ENCODE measurements at regions of chr12 and their contacts with region 1.

Region 1: DNA sequence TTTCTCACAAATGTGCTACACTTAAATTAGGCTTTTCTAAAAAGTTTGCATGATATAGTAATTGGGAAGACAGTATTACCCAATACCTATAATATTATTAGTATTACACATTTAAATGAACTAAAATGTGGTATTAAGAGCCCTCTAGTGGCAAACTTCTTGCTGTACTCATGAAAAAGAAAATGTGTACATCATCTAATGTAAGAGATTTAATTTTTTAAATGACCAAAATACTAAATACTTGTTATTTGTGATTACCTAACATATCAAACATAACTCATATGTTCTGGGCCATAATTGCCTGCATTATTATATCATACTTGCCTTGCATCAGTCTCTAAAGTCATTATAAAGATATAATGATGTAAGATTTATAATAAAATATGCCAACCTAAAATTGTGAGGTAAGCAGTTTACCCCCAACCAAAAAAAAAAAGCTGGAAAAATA is 64.2 kb downstream of the DNAI7 start:
- DNase-seq: no peak
- ATAC-seq: peak; percentile 78
- H3K4me3 ChIP-seq: no peak overlapping the region
- H3K27ac ChIP-seq: no peak overlapping the region
- H3K4me1 ChIP-seq: peaks cover 2% of the 10 kb centered on the region; the same call in 1 of the 2 replicates
- H3K27me3 ChIP-seq: no peaks in the 10 kb centered on the region
- CTCF ChIP-seq: peak in 2 of 3 experiments; percentile 32 to 43; a peak in 3 of 6 replicates
- EP300 ChIP-seq: no peak
- POLR2A ChIP-seq: no peak
- RAD21 ChIP-seq: peak; percentile 65

Region 2: DNA sequence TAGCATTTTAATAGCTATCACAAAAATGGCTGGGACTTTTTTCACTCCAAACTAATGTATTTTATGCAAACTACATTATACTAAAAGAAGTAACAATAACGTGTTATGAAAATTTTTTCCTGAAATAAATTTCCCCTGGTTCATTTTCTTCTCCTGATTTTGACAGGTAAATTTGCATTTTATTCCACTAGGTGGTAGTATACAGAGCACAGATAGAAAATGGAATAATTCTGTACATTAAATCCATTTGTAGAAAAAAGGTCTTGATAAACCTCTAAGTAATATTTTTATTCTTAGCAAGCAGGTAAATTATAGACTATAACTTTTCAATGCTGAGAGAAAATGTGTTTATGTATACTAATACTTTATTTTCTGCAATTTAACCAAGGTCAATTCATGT is 278.3 kb before region 1 on chr12:
- CTCF ChIA-PET with region 1: interaction called, 41 read pairs
- POLR2A ChIA-PET with region 1: no interaction called
- RAD21 ChIA-PET with region 1: interaction called, 5 read pairs
- SMC1A ChIA-PET with region 1: interaction called, 5 read pairs
- in situ Hi-C with region 1: loop called (anchors 5 kb)
- intact Hi-C with region 1: loop called (anchors 1 kb)
- DNase-seq: no peak
- ATAC-seq: no peak; the same call in 2 of the 3 replicates
- H3K4me3 ChIP-seq: no peak overlapping the region
- H3K27ac ChIP-seq: no peak overlapping the region
- H3K4me1 ChIP-seq: no peaks in the 10 kb centered on the region
- H3K27me3 ChIP-seq: no peaks in the 10 kb centered on the region
- CTCF ChIP-seq: peak in 2 of 3 experiments; percentile 14 to 28; a peak in 2 of 6 replicates
- EP300 ChIP-seq: no peak
- POLR2A ChIP-seq: no peak
- RAD21 ChIP-seq: peak; percentile 46

Region 3: DNA sequence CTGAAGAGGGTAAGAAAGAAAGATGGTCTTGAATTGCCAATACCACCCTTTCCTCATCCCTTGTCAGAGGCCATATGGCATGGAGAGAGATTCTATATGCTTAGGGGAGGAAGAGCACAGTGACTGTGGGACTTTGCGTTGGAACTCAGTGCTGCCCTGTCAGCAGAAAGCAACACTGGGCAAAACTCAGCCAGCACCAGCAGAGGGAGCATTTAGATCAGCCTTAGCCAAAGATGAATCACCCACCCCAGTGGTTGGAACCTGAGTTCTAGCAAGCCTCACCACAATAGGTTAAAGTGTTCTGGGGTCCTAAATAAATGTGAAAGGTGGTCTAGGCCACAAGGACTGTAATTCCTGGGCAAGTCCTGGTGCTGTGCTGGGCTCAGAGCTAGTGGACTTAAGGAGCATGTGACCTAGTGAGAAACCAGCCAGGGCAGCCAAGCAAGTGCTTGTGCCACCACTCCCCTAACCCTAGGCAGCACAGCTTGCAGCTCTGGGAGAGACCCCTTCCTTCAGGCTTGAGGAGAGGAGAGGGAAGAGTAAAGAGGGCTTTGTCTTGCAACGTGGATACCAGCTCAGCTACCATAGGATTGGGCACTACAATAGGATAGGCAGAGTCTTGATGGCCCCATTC is 170.4 kb before region 1 on chr12:
- CTCF ChIA-PET with region 1: interaction called, 12 read pairs
- POLR2A ChIA-PET with region 1: no interaction called
- RAD21 ChIA-PET with region 1: interaction called, 4 read pairs
- SMC1A ChIA-PET with region 1: interaction called, 15 read pairs
- in situ Hi-C with region 1: no loop called
- intact Hi-C with region 1: loop called (anchors 1 kb)
- DNase-seq: peak; percentile 56
- ATAC-seq: peak; percentile 94
- H3K4me3 ChIP-seq: no peak overlapping the region
- H3K27ac ChIP-seq: no peak overlapping the region
- H3K4me1 ChIP-seq: peaks cover 7% of the 10 kb centered on the region
- H3K27me3 ChIP-seq: no peaks in the 10 kb centered on the region
- CTCF ChIP-seq: peak; percentile 75 to 85 (median 76)
- EP300 ChIP-seq: no peak
- POLR2A ChIP-seq: no peak
- RAD21 ChIP-seq: peak; percentile 77

Region 4: DNA sequence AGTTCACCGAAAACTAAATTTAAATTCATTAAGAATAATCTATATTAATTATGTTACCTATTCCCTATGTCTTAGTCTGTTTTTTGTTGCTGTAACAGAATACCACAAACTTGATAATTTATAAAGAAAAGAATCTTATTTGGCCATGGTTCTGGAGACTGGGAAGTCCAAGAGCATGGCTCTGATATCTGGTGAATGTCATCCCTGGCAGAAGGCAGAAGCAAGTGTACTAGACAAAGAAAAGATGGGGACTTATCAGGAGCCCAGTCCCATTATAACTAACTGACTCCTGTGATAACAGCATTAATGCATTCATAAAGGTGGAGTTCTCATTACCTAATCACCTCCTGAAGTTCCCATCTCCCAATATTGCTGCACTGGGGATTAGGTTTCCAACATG is 148.5 kb before region 1 on chr12:
- CTCF ChIA-PET with region 1: interaction called, 12 read pairs
- POLR2A ChIA-PET with region 1: no interaction called
- RAD21 ChIA-PET with region 1: interaction called, 4 read pairs
- SMC1A ChIA-PET with region 1: interaction called, 5 read pairs
- in situ Hi-C with region 1: no loop called
- intact Hi-C with region 1: no loop called
- DNase-seq: no peak
- ATAC-seq: no peak
- H3K4me3 ChIP-seq: no peak overlapping the region
- H3K27ac ChIP-seq: no peak overlapping the region
- H3K4me1 ChIP-seq: peaks cover 4% of the 10 kb centered on the region
- H3K27me3 ChIP-seq: no peaks in the 10 kb centered on the region
- CTCF ChIP-seq: no peak
- EP300 ChIP-seq: no peak
- POLR2A ChIP-seq: no peak
- RAD21 ChIP-seq: no peak

Region 5: GRCh38 chr12:25107920-25108319 is 22.8 kb before region 1 on chr12:
- CTCF ChIA-PET with region 1: interaction called, 7 read pairs
- POLR2A ChIA-PET with region 1: no interaction called
- RAD21 ChIA-PET with region 1: interaction called, 5 read pairs
- SMC1A ChIA-PET with region 1: interaction called, 11 read pairs
- in situ Hi-C with region 1: no loop called
- intact Hi-C with region 1: no loop called
- DNase-seq: peak; percentile 64
- ATAC-seq: peak; percentile 86
- H3K4me3 ChIP-seq: no peak overlapping the region
- H3K27ac ChIP-seq: peak overlapping the region; percentile 60
- H3K4me1 ChIP-seq: peaks cover 16% of the 10 kb centered on the region
- H3K27me3 ChIP-seq: no peaks in the 10 kb centered on the region
- CTCF ChIP-seq: no peak
- EP300 ChIP-seq: peak; percentile 33 to 95; a peak in 3 of 4 replicates
- POLR2A ChIP-seq: no peak
- RAD21 ChIP-seq: no peak

Region 6: GRCh38 chr12:25151476-25151875 is 20.7 kb after region 1 on chr12:
- CTCF ChIA-PET with region 1: interaction called, 29 read pairs
- POLR2A ChIA-PET with region 1: no interaction called
- RAD21 ChIA-PET with region 1: interaction called, 6 read pairs
- SMC1A ChIA-PET with region 1: interaction called, 8 read pairs
- in situ Hi-C with region 1: no loop called
- intact Hi-C with region 1: no loop called
- DNase-seq: no peak
- ATAC-seq: no peak
- H3K4me3 ChIP-seq: no peak overlapping the region
- H3K27ac ChIP-seq: no peak overlapping the region
- H3K4me1 ChIP-seq: peaks cover 17% of the 10 kb centered on the region
- H3K27me3 ChIP-seq: no peaks in the 10 kb centered on the region
- CTCF ChIP-seq: no peak
- EP300 ChIP-seq: no peak
- POLR2A ChIP-seq: no peak
- RAD21 ChIP-seq: no peak

Region 7: DNA sequence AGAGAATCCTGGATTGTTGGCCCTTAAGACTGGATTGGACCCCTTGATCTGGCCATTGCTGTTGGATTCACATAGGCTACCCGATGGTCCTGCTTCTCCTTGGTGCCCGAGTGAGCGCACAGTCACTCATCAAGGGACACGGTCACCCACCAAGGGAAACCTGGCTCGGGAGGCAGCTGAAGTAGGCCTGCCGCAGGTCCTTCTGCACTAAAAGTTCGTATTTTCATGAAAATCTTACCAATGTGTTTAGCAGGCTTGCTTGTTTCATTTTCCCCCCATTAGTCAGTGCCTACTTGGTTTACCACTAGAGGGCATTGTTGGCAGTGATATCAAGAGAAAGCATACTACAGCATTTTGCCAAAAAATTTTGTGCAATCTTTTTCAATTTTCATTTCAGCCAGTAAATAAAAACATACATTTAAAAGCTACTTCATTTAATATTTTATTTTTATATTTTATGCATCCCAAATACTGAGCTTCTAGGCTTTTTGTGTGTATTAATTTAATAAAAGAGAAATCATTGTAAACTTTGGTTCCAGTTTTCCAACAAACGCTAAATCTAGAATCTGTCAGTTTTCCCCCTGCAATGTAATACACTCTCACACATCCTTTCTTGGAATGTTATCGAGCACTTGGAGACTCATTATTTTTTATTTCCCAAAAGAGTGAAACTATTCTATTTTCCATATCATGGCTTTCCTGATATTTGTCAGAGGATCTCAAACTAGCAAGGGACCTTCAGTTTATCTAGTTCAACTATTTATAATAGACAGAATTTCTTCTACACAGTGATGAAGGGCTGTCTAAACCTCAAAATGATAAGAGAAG is 305.7 kb after region 1 on chr12:
- CTCF ChIA-PET with region 1: no interaction called
- POLR2A ChIA-PET with region 1: no interaction called
- RAD21 ChIA-PET with region 1: no interaction called
- SMC1A ChIA-PET with region 1: no interaction called
- in situ Hi-C with region 1: no loop called
- intact Hi-C with region 1: no loop called
- DNase-seq: peak; percentile 20
- ATAC-seq: peak; percentile 94
- H3K4me3 ChIP-seq: no peak overlapping the region
- H3K27ac ChIP-seq: no peak overlapping the region
- H3K4me1 ChIP-seq: no peaks in the 10 kb centered on the region
- H3K27me3 ChIP-seq: no peaks in the 10 kb centered on the region
- CTCF ChIP-seq: peak; percentile 78 to 86 (median 84)
- EP300 ChIP-seq: no peak
- POLR2A ChIP-seq: no peak
- RAD21 ChIP-seq: peak; percentile 93